ENCODE measurements at regions of chr4 and their contacts with region 1.

Region 1: DNA sequence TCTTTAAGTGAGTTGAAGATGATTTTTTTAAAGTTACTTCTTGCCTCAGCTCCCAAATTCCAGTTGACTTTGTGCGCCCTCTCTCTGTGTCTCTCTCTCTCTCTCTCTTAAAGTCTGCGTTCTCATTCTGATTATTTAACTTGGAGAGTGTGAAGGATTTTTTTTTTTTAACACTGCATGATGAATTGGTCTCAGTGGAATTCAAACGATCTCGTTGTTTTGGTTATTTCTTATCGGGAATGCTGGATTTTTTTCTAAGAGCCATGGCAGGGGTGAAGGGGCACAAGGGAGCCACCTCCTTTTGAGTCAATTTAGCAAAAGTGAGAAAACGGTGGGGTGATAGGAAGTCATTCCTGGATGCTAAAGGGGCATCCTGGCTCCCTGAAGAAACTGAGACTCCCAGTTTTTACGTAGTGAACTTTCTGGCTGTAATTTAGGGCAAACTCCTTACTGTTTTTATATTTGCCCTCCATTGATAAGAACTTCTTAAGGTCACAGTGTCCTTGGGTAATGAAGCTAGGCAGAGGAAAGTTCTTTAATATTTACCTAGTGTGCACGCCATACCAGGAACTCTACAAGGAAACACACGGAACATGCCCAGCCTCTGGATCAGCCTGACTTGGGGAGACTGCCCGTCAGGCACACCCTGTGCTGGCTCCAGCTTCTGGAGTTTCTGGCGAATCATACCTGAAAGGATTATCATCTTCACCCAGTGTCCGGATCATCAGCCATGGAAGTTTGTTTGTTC is 176.3 kb downstream of the SHROOM3 start:
- DNase-seq: peak in 1 of 2 donors; percentile 58
- ATAC-seq: peak; percentile 83
- H3K4me3 ChIP-seq: no peak overlapping the region
- H3K27ac ChIP-seq: peak overlapping the region; percentile 12 to 99
- H3K4me1 ChIP-seq: peaks cover 15 to 37% of the 10 kb centered on the region in 2 donors
- H3K27me3 ChIP-seq: no peaks in the 10 kb centered on the region

Region 2: DNA sequence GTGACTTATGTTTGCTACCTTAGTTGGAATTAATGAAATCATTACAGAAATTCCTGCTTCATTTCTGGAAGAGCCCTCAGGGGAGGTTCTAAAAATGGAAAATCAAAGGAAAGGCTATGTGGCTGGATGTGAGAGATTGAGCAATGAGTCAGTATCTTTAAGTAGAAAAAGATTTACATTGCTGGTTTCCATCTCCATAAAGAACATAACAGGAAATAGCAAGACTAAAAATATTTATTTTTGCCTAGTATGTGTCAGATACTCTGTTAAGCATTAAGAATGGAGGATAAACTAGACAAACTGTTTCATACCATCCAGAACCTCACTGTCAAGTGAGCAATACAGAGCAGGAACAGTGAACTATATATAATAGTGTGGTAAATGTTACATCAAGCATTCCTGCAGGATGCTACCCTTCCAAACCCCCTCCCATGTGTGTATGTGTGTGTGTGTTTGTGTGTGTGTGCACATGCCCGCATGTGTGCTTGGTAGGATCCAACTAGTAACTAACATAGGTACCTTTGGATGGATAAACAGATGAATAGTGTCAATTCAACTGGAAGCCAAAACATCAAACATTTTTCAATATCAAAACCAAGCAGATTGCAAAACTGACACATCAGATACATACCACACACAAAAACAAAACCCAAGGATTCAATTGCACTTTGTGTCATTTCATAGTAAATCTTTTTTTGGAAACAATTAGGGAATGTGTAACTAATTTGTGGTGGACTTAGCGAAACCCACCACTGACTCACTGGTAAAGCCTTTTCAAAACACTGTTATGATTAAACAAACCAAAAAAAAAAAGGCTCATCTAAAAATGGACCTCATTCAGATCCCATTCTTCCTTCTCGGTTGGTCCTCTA is 47.1 kb after region 1 on chr4:
- intact Hi-C with region 1: loop called in 1 of 2 experiments (anchors 5 kb)
- DNase-seq: no peak
- ATAC-seq: no peak
- H3K4me3 ChIP-seq: no peak overlapping the region
- H3K27ac ChIP-seq: peak overlapping the region; percentile 85 to 97
- H3K4me1 ChIP-seq: peaks cover 18 to 21% of the 10 kb centered on the region in 2 donors
- H3K27me3 ChIP-seq: no peaks in the 10 kb centered on the region

Region 3: GRCh38 chr4:76680952-76681351 is 69.6 kb after region 1 on chr4:
- intact Hi-C with region 1: loop called in 1 of 2 experiments (anchors 5 kb)
- DNase-seq: no peak
- ATAC-seq: no peak
- H3K4me3 ChIP-seq: no peak overlapping the region
- H3K27ac ChIP-seq: peak overlapping the region in 1 of 2 donors; percentile 37
- H3K4me1 ChIP-seq: peaks cover 7 to 28% of the 10 kb centered on the region in 2 donors
- H3K27me3 ChIP-seq: no peaks in the 10 kb centered on the region

Region 4: GRCh38 chr4:76738086-76738931 is 127.0 kb after region 1 on chr4:
- intact Hi-C with region 1: loop called in 1 of 2 experiments (anchors 10 kb)
- DNase-seq: peak; percentile 74 to 83
- ATAC-seq: peak; percentile 78
- H3K4me3 ChIP-seq: no peak overlapping the region
- H3K27ac ChIP-seq: peak overlapping the region; percentile 86 to 91
- H3K4me1 ChIP-seq: peaks cover 4 to 11% of the 10 kb centered on the region in 2 donors
- H3K27me3 ChIP-seq: no peaks in the 10 kb centered on the region

Region 5: GRCh38 chr4:76748649-76749048 is 137.3 kb after region 1 on chr4:
- intact Hi-C with region 1: loop called in 1 of 2 experiments (anchors 5 kb)
- DNase-seq: no peak
- ATAC-seq: no peak
- H3K4me3 ChIP-seq: no peak overlapping the region
- H3K27ac ChIP-seq: peak overlapping the region in 1 of 2 donors; percentile 21
- H3K4me1 ChIP-seq: peaks cover 0 to 4% of the 10 kb centered on the region in 2 donors
- H3K27me3 ChIP-seq: no peaks in the 10 kb centered on the region

Region 6: GRCh38 chr4:77092975-77093374 is 481.6 kb after region 1 on chr4:
- intact Hi-C with region 1: no loop called
- DNase-seq: no peak
- ATAC-seq: no peak
- H3K4me3 ChIP-seq: no peak overlapping the region
- H3K27ac ChIP-seq: no peak overlapping the region
- H3K4me1 ChIP-seq: peaks cover 0 to 3% of the 10 kb centered on the region in 2 donors
- H3K27me3 ChIP-seq: no peaks in the 10 kb centered on the region